Caco-2 (cell line): ENCODE measurements at regions of chr15 and their contacts with region 1.

Region 1: DNA sequence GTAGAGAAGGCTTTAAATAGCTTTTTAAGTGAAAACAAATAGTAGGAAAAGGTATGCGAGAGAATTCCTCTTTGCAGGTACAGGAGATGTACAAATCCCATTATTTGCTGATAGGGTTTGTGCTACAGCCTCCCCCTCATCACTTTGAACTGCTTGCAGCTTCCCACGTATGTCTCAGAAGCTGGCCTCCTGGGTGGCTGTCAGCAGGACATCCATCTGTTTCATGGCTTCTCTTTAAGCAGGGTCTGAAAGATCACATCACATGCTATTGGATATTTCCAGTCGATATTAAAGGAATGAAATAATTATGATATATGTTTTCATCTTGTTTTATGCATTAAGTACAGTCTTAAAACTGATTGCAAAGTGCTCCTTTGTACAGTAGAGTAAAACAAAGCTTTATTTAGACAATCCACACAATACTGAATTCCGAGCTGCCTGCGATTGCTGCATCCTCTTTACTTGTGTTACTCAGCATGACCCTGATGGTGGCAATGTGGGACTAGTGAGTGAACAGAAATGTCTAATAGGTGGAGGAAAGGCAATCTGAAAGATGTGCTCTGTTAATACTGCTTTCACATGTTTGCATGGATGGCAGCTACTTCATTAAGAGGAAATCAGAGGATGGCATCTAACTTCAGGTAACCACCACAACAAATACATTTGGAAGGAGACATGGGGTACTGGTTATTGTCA is 930.6 kb upstream of the SEMA6D start:
- DNase-seq: no peak
- H3K4me3 ChIP-seq: no peak overlapping the region
- H3K4me3 Mint-ChIP-seq: no peak overlapping the region
- H3K27ac Mint-ChIP-seq: no peak overlapping the region
- H3K4me1 ChIP-seq: no peaks in the 10 kb centered on the region
- H3K4me1 Mint-ChIP-seq: no peaks in the 10 kb centered on the region
- H3K27me3 ChIP-seq: no peaks in the 10 kb centered on the region
- H3K27me3 Mint-ChIP-seq: peaks cover 8% of the 10 kb centered on the region
- CTCF ChIP-seq: no peak

Region 2: GRCh38 chr15:46856839-46857502 is 70.2 kb after region 1 on chr15:
- CTCF ChIA-PET with region 1: no interaction called
- POLR2A ChIA-PET with region 1: no interaction called
- intact Hi-C with region 1: no loop called
- DNase-seq: no peak
- H3K4me3 ChIP-seq: no peak overlapping the region
- H3K4me3 Mint-ChIP-seq: no peak overlapping the region
- H3K27ac Mint-ChIP-seq: no peak overlapping the region
- H3K4me1 ChIP-seq: no peaks in the 10 kb centered on the region
- H3K4me1 Mint-ChIP-seq: no peaks in the 10 kb centered on the region
- H3K27me3 ChIP-seq: no peaks in the 10 kb centered on the region
- H3K27me3 Mint-ChIP-seq: no peaks in the 10 kb centered on the region
- CTCF ChIP-seq: no peak

Region 3: GRCh38 chr15:47027322-47027946 is 240.7 kb after region 1 on chr15:
- CTCF ChIA-PET with region 1: no interaction called
- POLR2A ChIA-PET with region 1: no interaction called
- intact Hi-C with region 1: loop called (anchors 1 kb)
- DNase-seq: peak in 1 of 2 experiments; percentile 8
- H3K4me3 ChIP-seq: no peak overlapping the region
- H3K4me3 Mint-ChIP-seq: no peak overlapping the region
- H3K27ac Mint-ChIP-seq: no peak overlapping the region
- H3K4me1 ChIP-seq: peaks cover 8% of the 10 kb centered on the region; the same call in 1 of the 2 replicates
- H3K4me1 Mint-ChIP-seq: no peaks in the 10 kb centered on the region
- H3K27me3 ChIP-seq: no peaks in the 10 kb centered on the region
- H3K27me3 Mint-ChIP-seq: no peaks in the 10 kb centered on the region
- CTCF ChIP-seq: peak in 1 of 2 experiments; percentile 10